CD8-positive, alpha-beta T cell (primary cell): ENCODE measurements at regions of chr9 and their contacts with region 1.

Region 1: GRCh38 chr9:35657546-35658136 is at the start of gene RMRP:
- DNase-seq: peak; percentile 58 to 98 (median 83)
- ATAC-seq: peak; percentile 72
- H3K4me3 ChIP-seq: peak within 1 kb of the TSS; percentile 91 to 94
- H3K4me3 Mint-ChIP-seq: peak within 1 kb of the TSS; percentile 93
- H3K27ac ChIP-seq: peak within 1 kb of the TSS; percentile 99 to 100
- H3K27ac Mint-ChIP-seq: peak within 1 kb of the TSS; percentile 98
- H3K4me1 ChIP-seq: peaks cover 45% of the 10 kb centered on the region
- H3K4me1 Mint-ChIP-seq: peaks cover 69% of the 10 kb centered on the region
- H3K27me3 ChIP-seq: peaks cover 0 to 3% of the 10 kb centered on the region in 2 experiments
- H3K27me3 Mint-ChIP-seq: peaks cover 2% of the 10 kb centered on the region
- CTCF ChIP-seq: no peak
- total RNA-seq, gene RMRP: 22,073 to 26,359 TPM

Region 2: GRCh38 chr9:35203528-35203927 is 454.1 kb before region 1 on chr9:
- CTCF ChIA-PET with region 1: no interaction called
- POLR2A ChIA-PET with region 1: no interaction called
- intact Hi-C with region 1: no loop called
- DNase-seq: no peak
- ATAC-seq: no peak
- H3K4me3 ChIP-seq: no peak overlapping the region
- H3K4me3 Mint-ChIP-seq: no peak overlapping the region
- H3K27ac ChIP-seq: no peak overlapping the region
- H3K27ac Mint-ChIP-seq: no peak overlapping the region
- H3K4me1 ChIP-seq: no peaks in the 10 kb centered on the region
- H3K4me1 Mint-ChIP-seq: no peaks in the 10 kb centered on the region
- H3K27me3 ChIP-seq: peaks cover 0 to 3% of the 10 kb centered on the region in 2 experiments
- H3K27me3 Mint-ChIP-seq: peaks cover 18% of the 10 kb centered on the region
- CTCF ChIP-seq: no peak

Region 3: DNA sequence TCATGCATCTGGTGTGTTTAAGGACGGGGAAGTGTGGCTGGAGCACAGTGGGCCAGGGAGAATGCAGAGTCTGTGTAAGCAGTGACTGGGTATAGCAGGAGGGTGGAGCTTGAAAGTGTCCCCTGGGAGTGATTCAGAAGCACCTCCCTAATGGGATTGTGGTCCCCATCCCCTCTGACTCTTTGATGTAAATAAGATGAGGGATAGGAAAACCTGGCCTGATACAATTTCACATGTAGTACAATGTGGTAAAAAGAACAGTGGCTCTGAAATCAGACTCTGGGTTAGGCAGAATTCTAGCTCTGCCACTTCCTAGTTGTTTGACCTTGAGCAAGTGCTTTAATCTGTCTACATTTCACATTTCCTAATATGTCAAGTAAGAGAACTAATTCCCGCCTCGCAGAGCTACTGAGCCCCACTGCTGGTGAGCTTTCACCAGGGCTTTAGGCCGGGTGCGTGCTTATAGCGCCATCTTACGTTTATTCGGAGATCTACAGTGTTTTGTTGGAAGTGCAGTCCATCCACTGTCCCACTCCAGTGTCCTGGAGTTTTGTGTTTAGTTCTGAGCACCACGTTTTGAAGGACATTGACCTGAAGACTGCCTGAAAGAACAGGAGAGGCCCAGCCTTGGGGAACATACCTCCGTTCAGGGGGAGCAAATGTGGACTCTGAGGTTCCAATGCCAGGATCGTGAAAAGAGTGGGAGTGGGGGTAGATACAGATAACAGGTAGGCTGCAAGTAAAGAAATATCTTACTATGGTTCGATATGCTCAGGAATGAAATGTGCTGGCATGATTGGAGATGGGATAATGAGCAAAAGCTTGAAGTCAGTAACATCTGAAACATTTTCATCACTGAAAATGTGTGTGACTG is 103.7 kb before region 1 on chr9:
- CTCF ChIA-PET with region 1: no interaction called
- POLR2A ChIA-PET with region 1: no interaction called
- intact Hi-C with region 1: no loop called
- DNase-seq: peak in 4 of 9 experiments; percentile 18 to 53 (median 31)
- ATAC-seq: peak; percentile 51
- H3K4me3 ChIP-seq: no peak overlapping the region
- H3K4me3 Mint-ChIP-seq: no peak overlapping the region
- H3K27ac ChIP-seq: no peak overlapping the region
- H3K27ac Mint-ChIP-seq: no peak overlapping the region
- H3K4me1 ChIP-seq: no peaks in the 10 kb centered on the region
- H3K4me1 Mint-ChIP-seq: no peaks in the 10 kb centered on the region
- H3K27me3 ChIP-seq: no peaks in the 10 kb centered on the region
- H3K27me3 Mint-ChIP-seq: peaks cover 2% of the 10 kb centered on the region
- CTCF ChIP-seq: peak; percentile 47

Region 4: GRCh38 chr9:35611230-35611797 is 46.3 kb before region 1 on chr9:
- CTCF ChIA-PET with region 1: interaction called, 46 read pairs
- POLR2A ChIA-PET with region 1: interaction called, 16 read pairs
- intact Hi-C with region 1: loop called in 1 of 2 experiments (anchors 2 kb)
- DNase-seq: peak; percentile 18 to 80 (median 64)
- ATAC-seq: peak; percentile 99
- H3K4me3 ChIP-seq: no peak overlapping the region
- H3K4me3 Mint-ChIP-seq: no peak overlapping the region
- H3K27ac ChIP-seq: no peak overlapping the region
- H3K27ac Mint-ChIP-seq: peak overlapping the region; percentile 25
- H3K4me1 ChIP-seq: peaks cover 18% of the 10 kb centered on the region
- H3K4me1 Mint-ChIP-seq: peaks cover 16% of the 10 kb centered on the region
- H3K27me3 ChIP-seq: no peaks in the 10 kb centered on the region
- H3K27me3 Mint-ChIP-seq: no peaks in the 10 kb centered on the region
- CTCF ChIP-seq: peak; percentile 64

Region 5: DNA sequence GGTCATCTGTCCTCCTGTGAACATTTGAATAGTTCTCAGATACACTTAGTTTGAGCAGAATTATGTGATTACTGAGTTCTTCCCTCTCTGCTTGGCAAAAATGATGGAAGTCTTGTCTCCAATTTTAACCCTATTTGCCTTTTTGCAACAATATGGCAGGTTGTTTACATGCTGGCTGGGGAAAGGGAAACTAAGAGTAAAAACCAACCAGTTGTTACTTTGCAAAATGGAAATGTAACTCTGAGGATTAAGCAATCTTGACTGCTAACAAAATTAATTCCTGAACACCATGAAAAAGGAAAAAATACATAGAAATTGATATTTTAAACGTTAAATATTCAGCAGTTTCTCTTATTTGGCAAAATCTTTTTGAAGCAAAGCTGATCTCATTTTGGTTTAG is 18.0 kb before region 1 on chr9:
- CTCF ChIA-PET with region 1: interaction called, 135 read pairs
- POLR2A ChIA-PET with region 1: interaction called, 112 read pairs
- intact Hi-C with region 1: no loop called
- DNase-seq: no peak
- ATAC-seq: no peak
- H3K4me3 ChIP-seq: no peak overlapping the region
- H3K4me3 Mint-ChIP-seq: no peak overlapping the region
- H3K27ac ChIP-seq: peak overlapping the region in 1 of 2 experiments; percentile 56
- H3K27ac Mint-ChIP-seq: peak overlapping the region; percentile 79
- H3K4me1 ChIP-seq: peaks cover 36% of the 10 kb centered on the region
- H3K4me1 Mint-ChIP-seq: peaks cover 64% of the 10 kb centered on the region
- H3K27me3 ChIP-seq: no peaks in the 10 kb centered on the region
- H3K27me3 Mint-ChIP-seq: no peaks in the 10 kb centered on the region
- CTCF ChIP-seq: no peak

Region 6: GRCh38 chr9:35696525-35697215 is 39.0 kb after region 1 on chr9:
- CTCF ChIA-PET with region 1: interaction called, 193 read pairs
- POLR2A ChIA-PET with region 1: interaction called, 17 read pairs
- intact Hi-C with region 1: loop called (anchors 1 kb)
- DNase-seq: peak; percentile 34 to 78 (median 60)
- ATAC-seq: peak; percentile 97
- H3K4me3 ChIP-seq: no peak overlapping the region
- H3K4me3 Mint-ChIP-seq: no peak overlapping the region
- H3K27ac ChIP-seq: peak overlapping the region in 1 of 2 experiments; percentile 22
- H3K27ac Mint-ChIP-seq: peak overlapping the region; percentile 62
- H3K4me1 ChIP-seq: no peaks in the 10 kb centered on the region
- H3K4me1 Mint-ChIP-seq: peaks cover 6% of the 10 kb centered on the region
- H3K27me3 ChIP-seq: no peaks in the 10 kb centered on the region
- H3K27me3 Mint-ChIP-seq: no peaks in the 10 kb centered on the region
- CTCF ChIP-seq: peak; percentile 83

Region 7: GRCh38 chr9:36258208-36258988 is 600.8 kb after region 1 on chr9 and contains the start of gene GNE:
- CTCF ChIA-PET with region 1: no interaction called
- POLR2A ChIA-PET with region 1: no interaction called
- intact Hi-C with region 1: loop called in 1 of 2 experiments (anchors 2 kb)
- DNase-seq: peak; percentile 95 to 99 (median 98)
- ATAC-seq: peak; percentile 89
- H3K4me3 ChIP-seq: peak within 1 kb of the TSS; percentile 85 to 100
- H3K4me3 Mint-ChIP-seq: peak within 1 kb of the TSS; percentile 98
- H3K27ac ChIP-seq: peak within 1 kb of the TSS; percentile 90 to 91
- H3K27ac Mint-ChIP-seq: peak within 1 kb of the TSS; percentile 97
- H3K4me1 ChIP-seq: peaks cover 17% of the 10 kb centered on the region
- H3K4me1 Mint-ChIP-seq: peaks cover 16% of the 10 kb centered on the region
- H3K27me3 ChIP-seq: no peaks in the 10 kb centered on the region
- H3K27me3 Mint-ChIP-seq: no peaks in the 10 kb centered on the region
- CTCF ChIP-seq: no peak
- total RNA-seq, gene GNE: 17.3 to 17.4 TPM